ENCODE measurements at regions of chr6 and their contacts with region 1.

Region 1: DNA sequence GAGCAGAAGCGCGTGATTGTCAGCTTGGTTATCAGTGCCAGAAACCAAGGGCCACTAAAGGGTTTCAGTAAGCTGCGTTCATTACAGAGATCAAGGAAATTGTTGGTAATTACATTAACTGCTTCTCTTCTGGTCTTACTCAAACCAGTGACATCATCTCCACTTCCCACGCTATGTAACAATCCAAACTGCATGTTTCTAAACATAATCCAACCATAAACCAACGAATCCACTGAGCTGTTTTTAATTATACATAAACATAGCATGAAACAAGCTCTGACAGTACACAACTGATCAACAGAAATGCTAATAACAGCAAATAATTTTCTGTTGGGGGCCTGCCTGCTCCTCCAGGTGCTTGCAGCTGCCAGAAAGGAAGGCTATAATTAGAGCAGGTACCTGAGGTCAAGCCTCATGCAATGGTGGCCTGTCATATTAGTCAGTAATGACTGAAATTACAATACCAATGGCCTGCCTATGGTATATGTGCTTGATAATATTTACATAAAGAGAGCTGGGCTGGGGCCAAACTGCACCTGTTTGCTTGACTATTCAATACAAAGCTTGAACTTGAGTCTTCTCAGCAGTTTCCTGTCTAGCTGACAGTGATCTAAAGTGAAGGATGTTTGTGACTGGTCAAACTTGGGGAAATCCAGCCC is 40.1 kb downstream of the ILRUN start:
- DNase-seq: no peak
- H3K4me3 ChIP-seq: peak overlapping the region in 3 of 4 donors; percentile 37 to 45 (median 44)
- H3K27ac ChIP-seq: peak overlapping the region; percentile 86 to 94 (median 91)
- H3K4me1 ChIP-seq: peaks cover 0 to 50% (median 39%) of the 10 kb centered on the region in 4 donors
- H3K27me3 ChIP-seq: no peaks in the 10 kb centered on the region
- CTCF ChIP-seq: no peak
- EP300 ChIP-seq: no peak
- POLR2A ChIP-seq: no peak

Region 2: DNA sequence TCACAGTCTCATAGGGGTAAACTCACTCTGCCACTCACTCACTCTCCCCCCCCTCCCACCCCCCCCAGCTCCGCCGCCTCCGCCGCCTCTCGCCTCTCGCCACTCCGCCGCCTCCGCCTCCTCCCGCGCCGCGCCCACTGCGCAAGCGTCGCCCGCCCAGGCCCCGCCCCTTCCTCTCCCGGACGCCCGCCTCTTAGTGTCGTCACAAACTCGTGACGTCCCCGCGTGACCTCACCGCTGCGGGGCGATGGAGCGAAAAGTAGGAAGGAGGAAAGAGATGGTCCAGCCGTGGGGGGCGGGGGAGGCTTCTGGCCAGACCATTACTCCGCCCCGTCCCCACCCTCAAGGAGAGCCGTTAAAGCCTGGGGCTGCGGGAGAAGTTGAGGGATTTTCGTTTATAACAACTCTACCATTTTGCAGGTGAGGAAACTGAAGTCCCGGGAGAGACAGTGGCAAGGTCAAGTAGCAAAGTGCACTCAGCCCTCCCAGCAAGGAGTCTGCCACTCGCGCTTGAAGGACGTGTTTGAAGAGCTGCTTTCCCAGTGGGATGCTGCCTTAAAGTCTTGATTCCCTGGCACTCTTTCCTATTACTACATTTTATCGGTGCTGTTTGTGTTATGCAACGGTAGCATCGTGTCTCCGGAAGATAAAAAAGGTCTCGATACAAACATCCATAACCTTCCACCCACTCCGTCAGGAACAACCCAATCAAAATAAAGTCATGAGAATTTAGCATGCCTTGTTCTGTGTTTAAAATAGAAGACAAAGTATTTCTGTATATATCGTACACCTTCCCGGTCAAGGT is 40.4 kb after region 1 on chr6 and contains the start of gene ILRUN:
- intact Hi-C with region 1: loop called (anchors 2 kb)
- DNase-seq: peak; percentile 98
- H3K4me3 ChIP-seq: peak within 1 kb of the TSS; percentile 80 to 98 (median 96)
- H3K27ac ChIP-seq: peak within 1 kb of the TSS; percentile 95 to 99 (median 97)
- H3K4me1 ChIP-seq: peaks cover 0 to 35% (median 29%) of the 10 kb centered on the region in 4 donors
- H3K27me3 ChIP-seq: no peaks in the 10 kb centered on the region
- CTCF ChIP-seq: no peak
- EP300 ChIP-seq: peak in 1 of 4 donors; percentile 17
- POLR2A ChIP-seq: peak; percentile 50 to 81
- total RNA-seq, gene ILRUN: 56.3 to 79.3 (median 78.4) TPM

Region 3: DNA sequence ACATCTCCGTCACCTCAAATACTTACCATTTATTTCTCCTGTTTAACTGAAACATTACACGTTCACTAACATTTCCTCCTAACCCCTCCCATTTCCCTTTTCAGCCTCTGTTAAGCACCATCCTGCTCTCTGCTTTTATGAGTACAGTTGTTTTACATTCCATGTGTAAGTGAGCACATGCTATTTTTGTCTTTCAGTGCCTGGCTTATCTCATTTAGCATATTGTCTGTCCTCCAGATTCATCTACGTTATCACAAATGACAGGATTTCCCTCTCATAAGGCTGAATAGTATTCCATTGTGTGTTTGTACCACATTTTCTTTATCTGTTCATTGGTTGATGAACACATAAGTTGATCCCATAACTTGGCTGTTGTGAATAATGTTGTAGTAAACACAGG is 208.6 kb after region 1 on chr6:
- intact Hi-C with region 1: no loop called
- DNase-seq: no peak
- H3K4me3 ChIP-seq: no peak overlapping the region
- H3K27ac ChIP-seq: peak overlapping the region in 3 of 4 donors; percentile 65 to 77 (median 74)
- H3K4me1 ChIP-seq: peaks cover 0 to 20% (median 11%) of the 10 kb centered on the region in 4 donors
- H3K27me3 ChIP-seq: no peaks in the 10 kb centered on the region
- CTCF ChIP-seq: no peak
- EP300 ChIP-seq: peak in 3 of 4 donors; percentile 58 to 91 (median 79)
- POLR2A ChIP-seq: no peak

Measured in sigmoid colon (tissue), 7 donors.